Aorta (tissue), 5 donors: ENCODE measurements at regions of chr15 and their contacts with region 1.

Region 1: GRCh38 chr15:45634442-45635190 is at the start of gene SQOR:
- DNase-seq: peak; percentile 94
- ATAC-seq: peak; percentile 92
- H3K4me3 ChIP-seq: peak within 1 kb of the TSS; percentile 61
- H3K27ac ChIP-seq: peak within 1 kb of the TSS; percentile 10 to 83
- H3K4me1 ChIP-seq: peaks cover 3 to 5% of the 10 kb centered on the region in 2 donors
- H3K27me3 ChIP-seq: no peaks in the 10 kb centered on the region
- total RNA-seq, gene SQOR: 44.5 to 49.3 TPM

Region 2: GRCh38 chr15:44265757-44266156 is 1368.9 kb before region 1 on chr15:
- intact Hi-C with region 1: no loop called
- DNase-seq: no peak
- ATAC-seq: no peak
- H3K4me3 ChIP-seq: no peak overlapping the region
- H3K27ac ChIP-seq: no peak overlapping the region
- H3K4me1 ChIP-seq: no peaks in the 10 kb centered on the region
- H3K27me3 ChIP-seq: no peaks in the 10 kb centered on the region

Region 3: DNA sequence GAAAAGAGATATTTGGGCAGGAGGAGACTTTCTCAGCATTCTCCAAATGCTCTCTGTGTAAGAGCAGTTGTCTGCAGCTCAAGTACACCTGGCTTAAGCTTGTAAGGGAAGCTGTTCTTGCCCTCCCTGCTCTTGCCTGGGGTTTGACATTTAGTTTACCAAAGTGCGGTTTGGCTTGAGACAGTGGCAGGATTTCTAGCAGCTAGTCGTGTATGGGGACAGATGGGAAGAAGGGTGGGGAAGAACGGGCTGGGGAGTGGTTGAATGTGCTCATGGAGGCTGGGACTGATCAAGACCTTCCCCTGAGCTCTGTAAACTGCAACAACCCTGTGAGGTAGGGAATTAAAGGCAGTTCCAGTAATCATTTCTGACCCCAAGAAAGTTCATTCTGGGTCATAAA is 40.1 kb after region 1 on chr15:
- intact Hi-C with region 1: no loop called
- DNase-seq: no peak
- ATAC-seq: no peak
- H3K4me3 ChIP-seq: no peak overlapping the region
- H3K27ac ChIP-seq: no peak overlapping the region
- H3K4me1 ChIP-seq: no peaks in the 10 kb centered on the region
- H3K27me3 ChIP-seq: no peaks in the 10 kb centered on the region

Region 4: GRCh38 chr15:45705510-45706473 is 71.2 kb after region 1 on chr15:
- intact Hi-C with region 1: loop called in 1 of 2 experiments (anchors 2 kb)
- DNase-seq: peak; percentile 79 to 88
- ATAC-seq: peak; percentile 93
- H3K4me3 ChIP-seq: peak overlapping the region; percentile 74 to 89
- H3K27ac ChIP-seq: no peak overlapping the region
- H3K4me1 ChIP-seq: no peaks in the 10 kb centered on the region
- H3K27me3 ChIP-seq: no peaks in the 10 kb centered on the region